Panc1 (cell line): ENCODE measurements at regions of chr1 and their contacts with region 1.

Region 1: DNA sequence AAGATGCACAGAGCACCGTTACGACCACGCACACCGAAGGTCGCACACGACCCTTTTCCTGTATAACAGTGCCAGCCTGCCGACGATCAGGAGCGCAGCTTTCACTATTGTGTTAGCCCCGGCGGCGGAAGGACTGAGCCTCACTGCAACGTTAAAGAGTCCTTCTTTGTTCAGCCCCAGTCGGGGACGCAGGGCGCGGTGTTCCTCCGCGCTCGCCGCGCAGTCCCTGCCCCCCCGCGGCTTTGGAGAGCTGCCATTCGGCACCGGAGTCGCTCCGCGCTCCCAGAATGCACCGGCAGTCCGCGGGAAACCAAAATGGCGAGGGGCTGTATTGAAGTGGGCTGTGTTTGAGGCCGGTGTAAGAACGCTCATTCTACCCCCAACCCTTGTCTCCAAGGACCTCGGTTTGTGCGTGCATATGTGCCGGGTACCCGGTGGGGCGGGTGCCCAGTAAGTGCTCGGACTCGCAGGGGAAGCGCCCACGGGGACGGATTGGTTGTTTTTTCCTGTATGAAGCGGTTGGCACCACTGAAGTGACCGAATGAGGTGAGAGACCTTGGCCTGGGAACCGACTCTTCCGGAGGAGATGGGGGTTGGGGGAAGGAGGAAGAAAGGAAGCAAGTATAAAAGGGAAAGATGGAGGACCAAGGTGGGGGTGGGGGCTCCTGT is at the start of gene MTF2:
- DNase-seq: peak; percentile 73
- ATAC-seq: peak; percentile 94
- H3K4me3 ChIP-seq: peak within 1 kb of the TSS; percentile 81 to 99
- H3K27ac ChIP-seq: peak within 1 kb of the TSS; percentile 97
- H3K4me1 ChIP-seq: peaks cover 4% of the 10 kb centered on the region
- H3K27me3 ChIP-seq: no peaks in the 10 kb centered on the region
- CTCF ChIP-seq: no peak
- total RNA-seq, gene MTF2: 24.8 TPM

Region 2: DNA sequence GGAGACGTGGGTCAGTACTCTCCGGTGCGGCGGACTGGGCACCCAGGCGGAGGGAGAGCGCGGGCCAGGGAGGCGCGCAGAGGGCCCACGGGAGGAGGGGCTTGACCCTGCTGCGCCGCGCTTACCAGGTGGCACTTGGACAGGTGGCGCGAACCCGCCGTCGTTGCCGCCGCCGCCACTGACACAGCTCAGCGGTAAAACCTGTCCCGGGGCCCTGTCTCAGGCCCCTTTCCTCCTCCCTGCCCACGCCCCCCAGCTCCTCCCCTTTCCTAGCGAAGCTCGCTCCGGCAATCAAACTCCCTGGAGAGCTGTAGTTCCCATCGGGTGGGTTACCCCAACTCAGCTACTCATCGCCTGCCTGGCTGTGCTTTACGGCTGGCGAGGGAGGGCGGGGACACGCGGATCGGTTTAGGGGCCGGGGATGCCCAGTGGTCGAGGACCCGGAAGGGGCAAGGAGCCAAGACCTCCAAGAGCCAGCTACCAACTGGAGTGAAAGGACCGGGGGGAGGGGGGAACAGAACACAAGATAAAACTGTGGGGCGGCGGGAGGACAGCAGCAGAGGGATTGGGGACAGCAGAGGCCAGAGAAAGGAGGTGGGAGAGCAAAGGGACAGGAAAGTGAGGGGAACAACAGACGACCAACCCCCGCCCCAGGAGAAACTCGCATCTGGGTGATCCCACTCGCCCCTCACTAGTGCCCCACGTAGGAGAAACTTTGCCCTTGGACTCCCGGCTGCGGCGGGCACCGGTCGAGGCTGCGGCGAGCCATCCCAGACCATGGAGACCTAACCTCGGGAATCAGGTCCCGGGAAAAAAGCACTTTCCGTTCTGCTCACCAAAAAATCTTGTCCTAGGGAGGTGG is 595.3 kb before region 1 on chr1:
- CTCF ChIA-PET with region 1: no interaction called
- POLR2A ChIA-PET with region 1: interaction called, 12 read pairs
- in situ Hi-C with region 1: no loop called
- intact Hi-C with region 1: no loop called
- DNase-seq: no peak
- ATAC-seq: peak; percentile 20; the same call in 1 of the 2 replicates
- H3K4me3 ChIP-seq: peak overlapping the region; percentile 37 to 52
- H3K27ac ChIP-seq: no peak overlapping the region
- H3K4me1 ChIP-seq: peaks cover 2% of the 10 kb centered on the region; the same call in 1 of the 2 replicates
- H3K27me3 ChIP-seq: peaks cover 8% of the 10 kb centered on the region
- CTCF ChIP-seq: no peak

Region 3: DNA sequence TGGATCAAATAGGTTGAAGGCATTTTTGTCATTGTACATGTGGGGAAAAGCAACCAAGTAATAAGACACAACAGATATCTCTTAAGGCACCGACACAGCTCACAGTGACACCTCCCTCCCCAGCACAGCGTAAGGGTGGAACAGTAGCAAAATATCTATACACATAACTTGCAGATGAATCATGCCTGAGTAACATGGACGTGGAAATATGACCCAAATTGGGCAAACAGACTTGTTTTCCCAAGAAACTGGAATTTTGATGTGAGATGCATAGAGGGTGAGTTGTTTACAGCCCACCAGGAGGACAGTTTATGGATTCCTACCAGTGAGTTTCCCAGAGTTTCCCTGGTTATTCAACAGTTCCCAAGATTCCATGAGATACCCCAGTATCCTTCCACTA is 259.3 kb after region 1 on chr1:
- CTCF ChIA-PET with region 1: no interaction called
- POLR2A ChIA-PET with region 1: interaction called, 10 read pairs
- in situ Hi-C with region 1: no loop called
- intact Hi-C with region 1: no loop called
- DNase-seq: no peak
- ATAC-seq: peak; percentile 71; the same call in 1 of the 2 replicates
- H3K4me3 ChIP-seq: no peak overlapping the region
- H3K27ac ChIP-seq: no peak overlapping the region
- H3K4me1 ChIP-seq: no peaks in the 10 kb centered on the region
- H3K27me3 ChIP-seq: no peaks in the 10 kb centered on the region
- CTCF ChIP-seq: no peak

Region 4: GRCh38 chr1:93473968-93474720 is 395.0 kb after region 1 on chr1:
- CTCF ChIA-PET with region 1: no interaction called
- POLR2A ChIA-PET with region 1: interaction called, 12 read pairs
- in situ Hi-C with region 1: no loop called
- intact Hi-C with region 1: no loop called
- DNase-seq: no peak
- ATAC-seq: no peak
- H3K4me3 ChIP-seq: no peak overlapping the region
- H3K27ac ChIP-seq: no peak overlapping the region
- H3K4me1 ChIP-seq: peaks cover 12% of the 10 kb centered on the region; the same call in 1 of the 2 replicates
- H3K27me3 ChIP-seq: no peaks in the 10 kb centered on the region
- CTCF ChIP-seq: no peak